Activated T-helper 1 cell treated with anti-CD3 and anti-CD28 coated beads, Interleukin-12 subunit alpha, Interleukin-12 subunit beta, Interleukin-2, Interleukin-4 antibody, amounts not matched to agents 30 ng/mL and 10 ng/mL and 1 ng/mL, durations not matched to agents 14 hours and 24 hours and 36 hours (primary cell): ENCODE measurements at regions of chrX and their contacts with region 1.

Region 1: DNA sequence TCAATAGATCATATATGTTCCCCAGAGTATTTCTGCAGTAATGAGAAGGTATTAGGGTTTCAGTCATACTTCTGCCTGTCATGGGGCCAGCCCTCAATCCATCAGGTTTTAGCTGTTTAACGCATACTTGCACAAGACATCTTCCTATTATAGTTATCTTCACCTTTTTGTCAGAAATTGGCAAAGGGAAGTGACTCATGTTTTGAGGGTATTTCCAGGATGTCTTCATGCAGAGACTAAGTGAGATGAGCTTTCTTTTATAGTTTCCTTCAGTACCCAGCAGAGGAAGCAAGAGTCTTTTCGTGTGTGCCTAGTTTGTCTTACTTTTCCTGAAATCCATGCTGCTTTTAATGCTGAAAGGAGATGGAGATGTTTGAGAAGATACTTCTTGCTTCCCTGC is 9.5 kb downstream of the CSTF2 start:
- DNase-seq: no peak
- H3K4me3 Mint-ChIP-seq: peak overlapping the region; percentile 73
- H3K27ac Mint-ChIP-seq: peak overlapping the region; percentile 94
- H3K4me1 Mint-ChIP-seq: peaks cover 38% of the 10 kb centered on the region
- H3K27me3 Mint-ChIP-seq: no peaks in the 10 kb centered on the region

Region 2: GRCh38 chrX:100673397-100673953 is 156.3 kb before region 1 on chrX:
- intact Hi-C with region 1: no loop called
- DNase-seq: no peak
- H3K4me3 Mint-ChIP-seq: no peak overlapping the region
- H3K27ac Mint-ChIP-seq: no peak overlapping the region
- H3K4me1 Mint-ChIP-seq: no peaks in the 10 kb centered on the region
- H3K27me3 Mint-ChIP-seq: peaks cover 3% of the 10 kb centered on the region

Region 3: GRCh38 chrX:100928660-100929613 is 99.2 kb after region 1 on chrX and contains the start of gene XKRX:
- intact Hi-C with region 1: loop called (anchors 1 kb)
- DNase-seq: peak; percentile 5
- H3K4me3 Mint-ChIP-seq: peak within 1 kb of the TSS; percentile 85
- H3K27ac Mint-ChIP-seq: peak within 1 kb of the TSS; percentile 34
- H3K4me1 Mint-ChIP-seq: peaks cover 22% of the 10 kb centered on the region
- H3K27me3 Mint-ChIP-seq: no peaks in the 10 kb centered on the region
- total RNA-seq, gene XKRX: 0.39 and 0.51 TPM in 2 replicates

Region 4: GRCh38 chrX:101051549-101052302 is 222.0 kb after region 1 on chrX and contains the start of gene TRMT2B:
- intact Hi-C with region 1: no loop called
- DNase-seq: peak; percentile 72
- H3K4me3 Mint-ChIP-seq: peak within 1 kb of the TSS; percentile 88
- H3K27ac Mint-ChIP-seq: peak within 1 kb of the TSS; percentile 93
- H3K4me1 Mint-ChIP-seq: peaks cover 17% of the 10 kb centered on the region
- H3K27me3 Mint-ChIP-seq: no peaks in the 10 kb centered on the region
- total RNA-seq, gene TRMT2B: 17.2 and 19.3 TPM in 2 replicates